CD4-positive, alpha-beta T cell (primary cell): ENCODE measurements at regions of chr13 and their contacts with region 1.

Region 1: DNA sequence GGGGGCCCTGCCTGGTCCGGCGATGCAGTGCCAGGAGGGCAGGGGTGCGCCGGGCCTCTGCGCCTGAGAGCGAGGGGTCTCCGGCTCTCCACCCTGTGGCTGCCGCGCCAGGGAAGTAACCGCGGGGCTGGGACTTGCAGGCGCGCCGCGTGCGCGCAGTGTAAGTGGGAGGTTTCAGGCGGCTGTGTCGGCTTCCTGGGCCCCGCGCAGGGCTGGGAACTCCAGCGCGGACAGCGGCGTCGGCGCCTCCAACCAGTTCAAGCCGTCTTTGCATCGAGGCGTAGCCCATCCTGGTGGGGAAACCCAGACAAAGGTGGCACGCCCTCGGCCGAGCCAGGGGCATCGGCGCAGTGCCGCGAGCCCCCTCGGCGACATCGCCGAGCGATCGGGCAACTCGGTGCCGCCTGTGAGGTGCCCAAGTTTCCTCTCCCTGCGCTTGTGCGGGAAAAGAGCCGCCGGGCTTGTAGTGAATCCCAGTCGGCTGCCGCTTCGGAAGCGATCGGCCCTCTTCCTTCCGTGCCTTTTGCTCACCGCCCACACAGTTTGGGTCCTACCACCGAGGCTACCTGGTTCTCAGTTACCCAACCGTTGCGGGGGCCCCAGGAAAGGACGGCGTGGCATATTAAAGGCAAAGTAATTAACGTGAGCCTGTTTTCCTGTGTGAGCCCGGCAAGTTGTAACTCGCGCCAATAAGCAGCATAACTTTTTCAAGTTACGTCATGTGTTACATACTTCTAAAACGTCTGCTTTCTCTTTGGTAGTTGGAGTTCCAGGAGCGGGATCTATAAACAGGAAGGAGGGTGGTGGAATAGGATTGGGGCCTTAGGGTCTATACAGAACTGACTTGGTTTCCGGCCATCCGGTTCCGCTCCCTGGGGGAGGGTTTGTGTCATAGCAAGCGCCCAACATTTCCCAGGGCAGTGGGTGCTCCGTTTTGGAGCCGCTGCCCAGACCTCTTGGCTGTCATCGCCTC is 1.2 kb downstream of the LRCH1 start:
- DNase-seq: peak; percentile 33 to 92 (median 52)
- ATAC-seq: peak; percentile 57
- H3K4me3 ChIP-seq: peak overlapping the region; percentile 97
- H3K4me3 Mint-ChIP-seq: peak overlapping the region; percentile 97
- H3K27ac ChIP-seq: peak overlapping the region; percentile 72 to 89
- H3K27ac Mint-ChIP-seq: peak overlapping the region; percentile 89
- H3K4me1 ChIP-seq: peaks cover 29% of the 10 kb centered on the region
- H3K4me1 Mint-ChIP-seq: peaks cover 56% of the 10 kb centered on the region
- H3K27me3 ChIP-seq: peaks cover 0 to 6% of the 10 kb centered on the region in 2 experiments
- H3K27me3 Mint-ChIP-seq: no peaks in the 10 kb centered on the region
- CTCF ChIP-seq: peak; percentile 23

Region 2: GRCh38 chr13:46492946-46493345 is 61.2 kb before region 1 on chr13:
- CTCF ChIA-PET with region 1: no interaction called
- POLR2A ChIA-PET with region 1: no interaction called
- intact Hi-C with region 1: loop called in 1 of 2 experiments (anchors 1 kb)
- DNase-seq: peak in 3 of 14 experiments; percentile 38 to 56 (median 54)
- ATAC-seq: no peak
- H3K4me3 ChIP-seq: no peak overlapping the region
- H3K4me3 Mint-ChIP-seq: no peak overlapping the region
- H3K27ac ChIP-seq: no peak overlapping the region
- H3K27ac Mint-ChIP-seq: no peak overlapping the region
- H3K4me1 ChIP-seq: no peaks in the 10 kb centered on the region
- H3K4me1 Mint-ChIP-seq: no peaks in the 10 kb centered on the region
- H3K27me3 ChIP-seq: peaks cover 0 to 3% of the 10 kb centered on the region in 2 experiments
- H3K27me3 Mint-ChIP-seq: peaks cover 5% of the 10 kb centered on the region
- CTCF ChIP-seq: peak; percentile 75

Region 3: DNA sequence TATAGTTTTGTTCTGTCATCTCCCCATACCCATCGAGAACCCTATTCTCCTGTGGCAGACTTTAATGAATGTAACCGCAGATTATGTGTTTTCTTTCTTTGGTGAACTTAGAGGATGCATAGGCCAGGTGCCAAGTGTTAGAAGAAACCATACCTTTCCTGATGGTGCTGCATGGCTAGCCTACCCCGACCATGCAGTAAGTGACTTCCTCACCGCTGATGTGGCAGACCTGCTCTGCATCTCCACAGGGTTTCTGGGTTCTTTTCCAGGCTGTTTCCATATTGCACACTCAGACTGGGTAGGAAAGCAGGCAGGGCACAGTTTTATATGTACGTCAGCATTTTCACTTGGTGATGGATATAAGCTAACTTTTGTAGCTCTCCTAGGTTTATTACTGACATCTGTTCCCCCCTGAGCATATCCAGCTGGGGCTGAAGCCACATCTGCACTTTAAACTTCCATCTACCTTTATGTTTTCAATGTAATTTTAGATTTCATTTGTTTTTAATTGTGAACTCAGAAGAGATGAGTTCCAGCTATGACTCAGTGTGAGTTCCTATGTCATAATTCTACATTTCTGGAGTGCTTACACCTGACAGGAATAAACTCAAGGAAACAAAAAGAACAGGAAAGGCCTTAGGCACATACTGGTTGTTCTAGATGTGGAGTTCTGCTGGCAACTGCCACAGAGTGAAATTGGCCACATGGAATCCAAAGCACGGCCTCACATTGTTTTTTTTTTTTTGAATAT is 41.1 kb after region 1 on chr13:
- CTCF ChIA-PET with region 1: interaction called, 11 read pairs
- POLR2A ChIA-PET with region 1: interaction called, 3 read pairs
- intact Hi-C with region 1: loop called (anchors 2 to 5 kb)
- DNase-seq: no peak
- ATAC-seq: no peak
- H3K4me3 ChIP-seq: no peak overlapping the region
- H3K4me3 Mint-ChIP-seq: no peak overlapping the region
- H3K27ac ChIP-seq: no peak overlapping the region
- H3K27ac Mint-ChIP-seq: peak overlapping the region; percentile 66
- H3K4me1 ChIP-seq: peaks cover 42% of the 10 kb centered on the region
- H3K4me1 Mint-ChIP-seq: peaks cover 94% of the 10 kb centered on the region
- H3K27me3 ChIP-seq: no peaks in the 10 kb centered on the region
- H3K27me3 Mint-ChIP-seq: no peaks in the 10 kb centered on the region
- CTCF ChIP-seq: no peak

Region 4: GRCh38 chr13:46668302-46668720 is 114.1 kb after region 1 on chr13:
- CTCF ChIA-PET with region 1: no interaction called
- POLR2A ChIA-PET with region 1: interaction called, 4 read pairs
- intact Hi-C with region 1: loop called (anchors 5 kb)
- DNase-seq: peak in 3 of 14 experiments; percentile 26 to 30 (median 27)
- ATAC-seq: no peak
- H3K4me3 ChIP-seq: peak overlapping the region; percentile 48
- H3K4me3 Mint-ChIP-seq: peak overlapping the region; percentile 87
- H3K27ac ChIP-seq: peak overlapping the region; percentile 56 to 60
- H3K27ac Mint-ChIP-seq: peak overlapping the region; percentile 81
- H3K4me1 ChIP-seq: peaks cover 23% of the 10 kb centered on the region
- H3K4me1 Mint-ChIP-seq: peaks cover 55% of the 10 kb centered on the region
- H3K27me3 ChIP-seq: no peaks in the 10 kb centered on the region
- H3K27me3 Mint-ChIP-seq: no peaks in the 10 kb centered on the region
- CTCF ChIP-seq: no peak

Region 5: GRCh38 chr13:46679369-46680120 is 125.4 kb after region 1 on chr13:
- CTCF ChIA-PET with region 1: interaction called, 9 read pairs
- POLR2A ChIA-PET with region 1: interaction called, 3 read pairs
- intact Hi-C with region 1: loop called in 1 of 2 experiments (anchors 1 kb)
- DNase-seq: peak in 12 of 14 experiments; percentile 6 to 74 (median 20)
- ATAC-seq: peak; percentile 88
- H3K4me3 ChIP-seq: peak overlapping the region; percentile 21
- H3K4me3 Mint-ChIP-seq: no peak overlapping the region
- H3K27ac ChIP-seq: peak overlapping the region in 1 of 2 donors; percentile 14
- H3K27ac Mint-ChIP-seq: no peak overlapping the region
- H3K4me1 ChIP-seq: peaks cover 6% of the 10 kb centered on the region
- H3K4me1 Mint-ChIP-seq: peaks cover 4% of the 10 kb centered on the region
- H3K27me3 ChIP-seq: no peaks in the 10 kb centered on the region
- H3K27me3 Mint-ChIP-seq: no peaks in the 10 kb centered on the region
- CTCF ChIP-seq: no peak

Region 6: DNA sequence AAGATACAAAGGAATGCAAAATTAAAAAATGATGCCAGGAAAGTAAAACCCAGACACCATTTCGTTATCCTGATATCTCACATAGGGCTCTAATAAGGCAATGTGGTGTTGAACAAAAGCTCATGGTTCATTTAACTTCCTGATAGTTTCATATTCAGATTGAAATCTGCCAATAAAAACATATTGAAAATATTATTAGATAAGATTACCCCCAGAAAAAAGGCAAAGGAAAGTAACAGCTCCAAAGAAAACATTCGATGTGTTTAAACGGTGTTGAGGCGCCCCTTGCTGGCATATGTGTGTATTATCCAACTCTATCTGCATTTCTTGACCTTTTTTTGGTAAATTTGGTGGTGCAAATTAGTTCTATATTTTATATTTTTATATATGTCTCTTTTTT is 166.9 kb after region 1 on chr13:
- CTCF ChIA-PET with region 1: interaction called, 14 read pairs
- POLR2A ChIA-PET with region 1: interaction called, 7 read pairs
- intact Hi-C with region 1: loop called (anchors 1 kb)
- DNase-seq: peak; percentile 12 to 69 (median 30)
- ATAC-seq: peak; percentile 64
- H3K4me3 ChIP-seq: no peak overlapping the region
- H3K4me3 Mint-ChIP-seq: no peak overlapping the region
- H3K27ac ChIP-seq: no peak overlapping the region
- H3K27ac Mint-ChIP-seq: no peak overlapping the region
- H3K4me1 ChIP-seq: no peaks in the 10 kb centered on the region
- H3K4me1 Mint-ChIP-seq: no peaks in the 10 kb centered on the region
- H3K27me3 ChIP-seq: no peaks in the 10 kb centered on the region
- H3K27me3 Mint-ChIP-seq: no peaks in the 10 kb centered on the region
- CTCF ChIP-seq: peak; percentile 71

Region 7: GRCh38 chr13:46796515-46797474 is 242.6 kb after region 1 on chr13 and contains the start of gene ESD:
- CTCF ChIA-PET with region 1: no interaction called
- POLR2A ChIA-PET with region 1: interaction called, 4 read pairs
- intact Hi-C with region 1: loop called in 1 of 2 experiments (anchors 2 kb)
- DNase-seq: peak; percentile 80 to 96 (median 88)
- ATAC-seq: peak; percentile 93
- H3K4me3 ChIP-seq: peak within 1 kb of the TSS; percentile 93
- H3K4me3 Mint-ChIP-seq: peak within 1 kb of the TSS; percentile 89
- H3K27ac ChIP-seq: peak within 1 kb of the TSS; percentile 71 to 83
- H3K27ac Mint-ChIP-seq: peak within 1 kb of the TSS; percentile 94
- H3K4me1 ChIP-seq: peaks cover 25% of the 10 kb centered on the region
- H3K4me1 Mint-ChIP-seq: peaks cover 43% of the 10 kb centered on the region
- H3K27me3 ChIP-seq: no peaks in the 10 kb centered on the region
- H3K27me3 Mint-ChIP-seq: no peaks in the 10 kb centered on the region
- CTCF ChIP-seq: no peak
- total RNA-seq, gene ESD: 30.8 to 34.1 TPM

Region 8: GRCh38 chr13:46961719-46962118 is 407.5 kb after region 1 on chr13:
- CTCF ChIA-PET with region 1: no interaction called
- POLR2A ChIA-PET with region 1: no interaction called
- intact Hi-C with region 1: no loop called
- DNase-seq: peak in 3 of 14 experiments; percentile 10 to 57 (median 39)
- ATAC-seq: no peak
- H3K4me3 ChIP-seq: no peak overlapping the region
- H3K4me3 Mint-ChIP-seq: no peak overlapping the region
- H3K27ac ChIP-seq: no peak overlapping the region
- H3K27ac Mint-ChIP-seq: no peak overlapping the region
- H3K4me1 ChIP-seq: no peaks in the 10 kb centered on the region
- H3K4me1 Mint-ChIP-seq: no peaks in the 10 kb centered on the region
- H3K27me3 ChIP-seq: peaks cover 0 to 3% of the 10 kb centered on the region in 2 experiments
- H3K27me3 Mint-ChIP-seq: peaks cover 3% of the 10 kb centered on the region
- CTCF ChIP-seq: no peak